ENCODE measurements at regions of chr6 and their contacts with region 1.

Region 1: DNA sequence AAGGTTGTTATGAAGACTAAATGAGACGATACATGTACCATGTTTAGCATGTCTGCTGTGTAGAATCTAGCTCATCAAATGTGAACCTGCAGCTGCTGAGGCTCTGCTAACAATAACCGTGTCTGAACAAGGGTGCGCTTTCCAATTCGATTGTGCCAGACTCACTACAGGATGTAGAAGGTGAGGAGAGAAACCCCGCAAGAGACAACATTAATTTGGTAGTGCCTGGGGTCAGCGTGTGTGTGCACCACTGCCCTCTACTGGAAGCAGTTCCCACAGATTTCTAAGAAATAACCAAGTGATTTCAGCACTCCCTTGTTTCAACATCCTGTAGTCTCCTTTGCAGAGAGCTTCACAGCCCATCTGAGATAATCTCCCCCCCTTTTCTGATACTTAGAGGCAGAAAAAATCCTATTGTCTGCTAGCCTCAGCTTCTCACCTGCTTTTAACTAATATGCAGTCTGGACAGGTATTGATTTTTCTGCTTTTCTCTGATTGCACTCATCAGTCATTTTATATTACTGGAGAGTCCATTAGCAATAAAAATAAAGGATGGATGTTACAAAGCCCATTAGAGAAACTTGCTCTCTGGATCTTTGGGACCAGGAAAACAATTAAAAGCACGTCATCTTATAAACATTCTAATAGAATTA is 96.7 kb upstream of the BACH2 start:
- DNase-seq: peak; percentile 61
- H3K4me3 ChIP-seq: no peak overlapping the region; a peak in 1 of 4 replicates
- H3K27ac ChIP-seq: no peak overlapping the region
- H3K4me1 ChIP-seq: peaks cover 0 to 14% of the 10 kb centered on the region in 2 experiments; a peak in 1 of 4 replicates
- H3K27me3 ChIP-seq: peaks cover 9% of the 10 kb centered on the region; the same call in 1 of the 2 replicates
- CTCF ChIP-seq: peak; percentile 89
- EP300 ChIP-seq: no peak
- RAD21 ChIP-seq: peak; percentile 85

Region 2: DNA sequence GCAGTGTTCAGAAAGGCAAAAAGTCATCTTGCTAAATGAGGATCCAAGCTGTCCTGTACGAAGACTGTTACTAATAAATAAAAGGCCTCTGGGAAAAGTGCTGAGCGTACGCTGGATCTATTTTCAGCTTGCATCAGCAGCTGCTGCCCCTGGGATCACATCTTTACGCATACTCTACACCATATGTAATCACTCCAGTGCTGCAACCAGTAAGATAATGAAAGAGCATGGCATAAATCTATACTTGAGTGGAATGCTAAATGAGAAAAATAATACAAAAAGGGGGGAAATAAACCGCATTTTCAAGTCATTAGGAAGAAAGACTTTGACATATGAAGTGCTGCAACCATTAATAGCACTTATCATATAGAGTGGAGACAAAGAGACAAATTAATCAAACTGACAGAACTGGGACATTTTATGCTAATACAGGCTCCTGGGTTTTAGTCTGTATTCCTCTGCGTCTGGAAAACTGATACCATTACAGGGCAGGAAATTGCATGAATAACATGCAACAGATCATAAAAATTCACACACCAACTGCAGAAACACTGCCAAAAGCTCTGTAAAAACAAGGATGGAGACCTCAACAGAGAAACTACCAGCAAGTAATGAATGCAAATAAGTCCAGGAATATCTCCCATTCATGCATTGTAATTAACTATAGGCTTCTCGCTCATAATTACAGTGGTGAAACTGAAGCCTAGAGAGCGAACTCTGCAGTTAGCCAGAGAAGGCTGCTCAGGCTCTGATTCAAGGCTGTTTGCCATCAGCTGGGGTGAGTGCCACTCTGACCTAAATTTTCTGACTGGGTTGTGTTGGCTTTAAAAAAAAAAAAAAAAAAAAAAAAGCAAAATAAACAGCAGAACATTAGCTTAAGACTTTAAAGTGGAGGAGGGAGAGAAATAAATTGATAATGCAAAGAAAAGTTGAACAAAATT is 415.3 kb before region 1 on chr6:
- CTCF ChIA-PET with region 1: interaction called, 34 read pairs
- POLR2A ChIA-PET with region 1: no interaction called
- DNase-seq: peak; percentile 54
- H3K4me3 ChIP-seq: peak overlapping the region in 1 of 2 experiments; percentile 21; a peak in 2 of 4 replicates
- H3K27ac ChIP-seq: peak overlapping the region; percentile 51 to 99
- H3K4me1 ChIP-seq: peaks cover 20 to 31% of the 10 kb centered on the region in 2 experiments; a peak in 3 of 4 replicates
- H3K27me3 ChIP-seq: no peaks in the 10 kb centered on the region
- CTCF ChIP-seq: no peak
- EP300 ChIP-seq: peak; percentile 38 to 94; a peak in 2 of 4 replicates
- RAD21 ChIP-seq: peak; percentile 35

Region 3: DNA sequence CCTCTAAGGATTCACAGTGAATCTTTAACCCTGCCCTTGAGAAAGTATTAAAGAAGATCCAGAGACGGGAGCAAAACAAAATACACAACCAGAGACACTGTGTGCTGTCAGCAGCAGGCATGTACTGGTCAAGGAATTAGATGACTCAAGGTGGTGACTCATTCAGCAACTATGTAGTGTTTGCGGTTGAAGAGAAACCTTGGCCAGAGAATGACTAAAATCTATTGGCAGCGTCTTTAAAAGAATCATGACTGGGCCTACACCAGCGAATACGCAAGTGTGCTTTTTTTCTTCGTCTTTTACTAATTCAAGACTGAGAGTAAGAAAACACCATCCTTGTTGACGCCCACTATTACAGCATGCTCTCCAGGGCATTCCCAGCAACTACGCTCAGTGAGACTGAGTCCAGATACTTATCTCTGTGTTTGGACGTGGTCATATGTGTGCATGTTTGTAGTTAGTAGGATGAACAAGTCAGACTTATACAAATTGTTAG is 24.3 kb before region 1 on chr6:
- CTCF ChIA-PET with region 1: interaction called, 11 read pairs
- POLR2A ChIA-PET with region 1: no interaction called
- DNase-seq: no peak
- H3K4me3 ChIP-seq: 0 out of 4 replicates have a peak overlapping the region, but pooled peaks of 1 of the 2 experiments have one; percentile 10
- H3K27ac ChIP-seq: peak overlapping the region; percentile 39 to 93; a peak in 3 of 4 replicates
- H3K4me1 ChIP-seq: peaks cover 2 to 4% of the 10 kb centered on the region in 2 experiments; a peak in 3 of 4 replicates
- H3K27me3 ChIP-seq: no peaks in the 10 kb centered on the region
- CTCF ChIP-seq: no peak
- EP300 ChIP-seq: peak in 1 of 2 experiments; percentile 89; a peak in 1 of 4 replicates
- RAD21 ChIP-seq: no peak

Region 4: DNA sequence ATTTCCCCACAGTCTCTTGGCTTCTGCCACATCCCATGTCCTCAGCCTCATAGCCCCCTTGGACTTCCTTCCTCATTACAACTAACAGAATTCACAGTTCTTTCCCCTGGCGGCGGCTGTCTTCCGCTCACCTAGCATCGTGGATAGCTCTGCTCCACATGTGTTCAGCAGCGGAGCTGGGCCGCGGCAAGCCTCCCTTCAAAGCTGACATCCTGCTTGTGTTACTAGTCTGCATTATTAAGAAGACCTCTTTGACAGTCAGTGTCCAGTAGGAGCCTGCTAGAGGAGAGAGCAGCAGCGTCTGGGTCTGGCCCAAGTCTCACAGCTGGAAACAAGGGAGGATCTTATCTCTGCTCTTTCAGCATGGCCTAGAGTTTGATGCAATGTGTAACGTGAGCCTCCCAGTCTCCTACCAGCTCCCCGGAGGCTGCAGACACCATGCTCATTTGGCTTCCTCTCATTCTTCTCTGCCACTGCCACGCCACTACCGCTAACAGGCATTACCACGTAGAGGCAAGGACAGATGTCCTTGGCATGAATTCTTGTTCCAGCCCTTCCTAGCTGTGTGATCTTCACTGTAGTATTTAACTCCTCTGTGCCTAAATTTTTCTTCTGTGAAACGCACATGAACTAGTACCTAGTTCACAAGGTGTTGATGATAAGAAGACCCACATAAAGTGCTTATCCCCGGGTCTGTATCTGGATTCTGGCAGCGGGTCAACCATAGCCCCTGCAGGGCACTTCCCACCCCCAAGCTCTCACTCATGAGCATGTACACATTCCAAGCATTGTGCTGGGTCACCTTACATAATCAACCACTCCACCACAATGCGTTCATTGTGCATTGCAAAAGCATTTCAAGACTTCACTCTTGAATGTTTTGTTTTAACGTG is 10.4 kb after region 1 on chr6:
- CTCF ChIA-PET with region 1: interaction called, 19 read pairs
- POLR2A ChIA-PET with region 1: no interaction called
- DNase-seq: peak; percentile 73
- H3K4me3 ChIP-seq: no peak overlapping the region
- H3K27ac ChIP-seq: peak overlapping the region in 1 of 2 experiments; percentile 43; a peak in 1 of 4 replicates
- H3K4me1 ChIP-seq: peaks cover 0 to 11% of the 10 kb centered on the region in 2 experiments; a peak in 2 of 4 replicates
- H3K27me3 ChIP-seq: no peaks in the 10 kb centered on the region
- CTCF ChIP-seq: no peak
- EP300 ChIP-seq: no peak
- RAD21 ChIP-seq: no peak; the same call in 1 of the 2 replicates

Region 5: GRCh38 chr6:90444160-90444714 is 50.9 kb after region 1 on chr6:
- CTCF ChIA-PET with region 1: interaction called, 19 read pairs
- POLR2A ChIA-PET with region 1: no interaction called
- DNase-seq: no peak
- H3K4me3 ChIP-seq: no peak overlapping the region
- H3K27ac ChIP-seq: no peak overlapping the region
- H3K4me1 ChIP-seq: peaks cover 0 to 18% of the 10 kb centered on the region in 2 experiments; a peak in 2 of 4 replicates
- H3K27me3 ChIP-seq: peaks cover 5% of the 10 kb centered on the region
- CTCF ChIP-seq: no peak
- EP300 ChIP-seq: no peak
- RAD21 ChIP-seq: no peak

Measured in SK-N-SH (cell line).